Activated CD8-positive, alpha-beta T cell treated with anti-CD3 and anti-CD28 coated beads for 36 hours (primary cell): ENCODE measurements at regions of chr20 and their contacts with region 1.

Region 1: DNA sequence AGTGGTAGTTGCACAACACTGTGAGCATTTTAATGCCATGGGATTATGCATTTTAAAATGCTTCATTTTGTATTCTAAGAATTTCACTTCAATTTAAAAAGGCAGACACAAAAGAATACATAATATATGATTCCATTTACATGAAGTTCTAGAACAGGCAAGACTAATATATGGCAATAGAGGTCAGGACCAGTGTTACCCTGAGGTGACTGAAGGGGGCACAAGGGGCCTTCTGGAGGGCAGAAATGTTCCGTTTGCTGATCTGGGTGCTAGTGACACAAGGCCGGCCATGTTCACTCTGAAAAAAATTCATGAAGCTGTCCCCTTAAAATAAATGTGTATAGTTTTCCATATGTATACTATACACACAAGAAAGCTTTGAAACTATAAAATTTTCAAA is 28.5 kb downstream of the TASP1 start:
- DNase-seq: peak; percentile 33
- ATAC-seq: no peak
- H3K4me3 Mint-ChIP-seq: no peak overlapping the region
- H3K27ac Mint-ChIP-seq: no peak overlapping the region
- H3K4me1 Mint-ChIP-seq: no peaks in the 10 kb centered on the region
- H3K27me3 Mint-ChIP-seq: no peaks in the 10 kb centered on the region
- CTCF ChIP-seq: peak; percentile 49

Region 2: GRCh38 chr20:13525225-13525940 is 84.8 kb before region 1 on chr20:
- CTCF ChIA-PET with region 1: no interaction called
- POLR2A ChIA-PET with region 1: no interaction called
- intact Hi-C with region 1: no loop called
- DNase-seq: no peak
- ATAC-seq: no peak
- H3K4me3 Mint-ChIP-seq: no peak overlapping the region
- H3K27ac Mint-ChIP-seq: no peak overlapping the region
- H3K4me1 Mint-ChIP-seq: peaks cover 3% of the 10 kb centered on the region
- H3K27me3 Mint-ChIP-seq: no peaks in the 10 kb centered on the region
- CTCF ChIP-seq: no peak

Region 3: GRCh38 chr20:13784893-13785715 is 174.9 kb after region 1 on chr20 and contains the starts of genes ESF1 and NDUFAF5:
- CTCF ChIA-PET with region 1: interaction called, 12 read pairs
- POLR2A ChIA-PET with region 1: no interaction called
- intact Hi-C with region 1: no loop called
- DNase-seq: peak; percentile 97
- ATAC-seq: peak; percentile 99
- H3K4me3 Mint-ChIP-seq: peak within 1 kb of the TSS; percentile 100
- H3K27ac Mint-ChIP-seq: peak within 1 kb of the TSS; percentile 98
- H3K4me1 Mint-ChIP-seq: peaks cover 52% of the 10 kb centered on the region
- H3K27me3 Mint-ChIP-seq: no peaks in the 10 kb centered on the region
- CTCF ChIP-seq: no peak
- total RNA-seq, gene ESF1: 19.9 to 20.4 TPM
- total RNA-seq, gene NDUFAF5: 25.9 to 28.4 TPM